Vagina (tissue), 2 donors: ENCODE measurements at regions of chr20 and their contacts with region 1.

Region 1: DNA sequence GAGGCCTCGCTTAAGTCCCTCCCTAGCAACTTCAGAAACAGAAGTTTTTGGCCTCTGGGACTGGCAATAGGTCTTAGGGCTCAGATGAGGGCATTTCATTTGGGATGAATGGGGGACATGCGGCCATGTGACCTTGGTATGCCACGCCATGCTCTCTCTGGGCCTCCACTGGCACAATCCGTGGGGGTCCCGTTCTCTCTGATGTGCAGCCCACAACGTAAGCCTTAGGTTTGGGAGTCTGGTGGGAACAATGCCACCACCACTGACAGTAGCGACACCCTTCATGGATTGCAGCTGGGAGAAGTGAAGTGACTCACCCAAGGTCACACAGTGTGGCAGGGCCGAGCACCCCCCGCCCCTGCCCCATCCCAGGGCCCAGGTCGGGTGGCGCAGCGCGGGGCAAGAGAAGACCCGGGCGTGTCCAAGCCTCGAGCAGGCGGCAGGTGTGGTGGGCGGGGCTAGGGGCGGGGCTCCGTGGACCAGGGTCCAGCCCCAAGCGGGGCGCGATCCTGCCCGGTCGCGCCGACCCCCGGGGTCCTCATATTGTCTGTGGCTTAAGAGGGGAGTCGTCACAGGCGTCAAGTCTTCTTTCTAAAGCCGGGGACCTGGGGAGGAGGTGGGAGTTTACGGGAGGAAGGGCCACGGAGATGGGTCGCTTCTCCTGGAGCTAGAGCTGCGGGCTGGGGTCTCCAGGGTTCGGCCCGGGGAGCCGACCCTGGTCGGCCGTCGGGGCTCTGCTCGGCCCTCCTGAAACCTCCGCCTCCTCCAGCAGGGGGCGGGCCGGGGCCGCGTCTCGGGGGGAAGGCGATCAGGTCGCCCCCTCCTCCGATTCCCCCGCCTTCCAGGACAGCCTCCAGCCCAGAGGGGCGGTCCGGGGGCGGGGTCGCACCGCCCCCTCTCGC is 698 bp upstream of the CEBPB start:
- DNase-seq: peak in 1 of 2 donors; percentile 93
- H3K4me3 ChIP-seq: peak overlapping the region; percentile 88 to 98
- H3K27ac ChIP-seq: peak overlapping the region; percentile 100
- H3K4me1 ChIP-seq: peaks cover 46% of the 10 kb centered on the region
- H3K27me3 ChIP-seq: no peaks in the 10 kb centered on the region
- CTCF ChIP-seq: peak; percentile 68 to 97 (median 86)
- POLR2A ChIP-seq: no peak

Region 2: DNA sequence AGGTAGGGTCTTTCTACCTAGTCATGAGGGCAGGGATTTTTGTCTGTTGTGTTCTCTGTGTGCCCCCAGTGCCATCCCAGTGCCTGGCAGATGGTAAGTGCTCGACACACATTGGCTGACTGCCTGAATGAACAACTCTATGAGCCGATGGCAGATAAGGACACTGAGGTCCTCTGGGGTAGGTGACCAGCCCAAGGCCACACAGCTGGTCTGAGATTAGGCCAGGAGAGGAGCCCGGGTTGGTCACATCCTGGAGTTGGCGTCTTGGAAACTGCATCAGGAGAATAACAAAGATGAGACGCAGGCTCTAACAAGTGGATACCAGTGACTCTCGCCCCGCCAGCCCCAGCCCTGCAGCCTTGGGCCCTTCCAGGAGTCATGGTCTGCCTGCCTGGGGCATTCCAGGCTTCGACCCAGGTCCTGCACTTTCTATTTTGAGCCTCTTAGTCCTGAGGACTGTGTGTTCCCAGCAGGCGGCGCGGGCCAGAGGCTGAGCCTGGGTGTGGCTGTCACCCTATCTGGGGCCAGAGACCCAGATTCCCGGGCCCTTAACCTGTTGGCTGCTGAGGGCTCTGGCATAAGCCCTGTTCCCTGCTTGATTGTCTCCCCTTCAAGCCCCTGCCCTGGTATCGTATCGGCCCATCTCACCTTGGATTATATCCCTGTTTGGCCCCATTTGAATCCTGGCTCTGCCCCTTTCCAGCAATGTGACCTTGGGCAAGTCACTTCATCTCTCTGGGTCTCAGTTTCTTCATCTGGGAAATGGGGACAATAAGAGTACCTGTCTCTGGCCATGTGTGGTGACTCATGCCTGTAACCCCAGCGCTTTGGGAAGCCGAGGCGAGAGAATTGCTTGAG is 89.0 kb after region 1 on chr20:
- intact Hi-C with region 1: loop called (anchors 5 kb)
- DNase-seq: no peak
- H3K4me3 ChIP-seq: no peak overlapping the region
- H3K27ac ChIP-seq: peak overlapping the region; percentile 95
- H3K4me1 ChIP-seq: peaks cover 58% of the 10 kb centered on the region
- H3K27me3 ChIP-seq: no peaks in the 10 kb centered on the region
- CTCF ChIP-seq: peak in 1 of 3 experiments; percentile 16
- POLR2A ChIP-seq: peak in 1 of 2 donors; percentile 10

Region 3: GRCh38 chr20:50308513-50309279 is 118.8 kb after region 1 on chr20:
- intact Hi-C with region 1: loop called (anchors 1 kb)
- DNase-seq: peak in 1 of 2 donors; percentile 98
- H3K4me3 ChIP-seq: no peak overlapping the region
- H3K27ac ChIP-seq: peak overlapping the region; percentile 91
- H3K4me1 ChIP-seq: peaks cover 76% of the 10 kb centered on the region
- H3K27me3 ChIP-seq: no peaks in the 10 kb centered on the region
- CTCF ChIP-seq: peak in 1 of 3 experiments; percentile 20
- POLR2A ChIP-seq: peak in 1 of 2 donors; percentile 74

Region 4: DNA sequence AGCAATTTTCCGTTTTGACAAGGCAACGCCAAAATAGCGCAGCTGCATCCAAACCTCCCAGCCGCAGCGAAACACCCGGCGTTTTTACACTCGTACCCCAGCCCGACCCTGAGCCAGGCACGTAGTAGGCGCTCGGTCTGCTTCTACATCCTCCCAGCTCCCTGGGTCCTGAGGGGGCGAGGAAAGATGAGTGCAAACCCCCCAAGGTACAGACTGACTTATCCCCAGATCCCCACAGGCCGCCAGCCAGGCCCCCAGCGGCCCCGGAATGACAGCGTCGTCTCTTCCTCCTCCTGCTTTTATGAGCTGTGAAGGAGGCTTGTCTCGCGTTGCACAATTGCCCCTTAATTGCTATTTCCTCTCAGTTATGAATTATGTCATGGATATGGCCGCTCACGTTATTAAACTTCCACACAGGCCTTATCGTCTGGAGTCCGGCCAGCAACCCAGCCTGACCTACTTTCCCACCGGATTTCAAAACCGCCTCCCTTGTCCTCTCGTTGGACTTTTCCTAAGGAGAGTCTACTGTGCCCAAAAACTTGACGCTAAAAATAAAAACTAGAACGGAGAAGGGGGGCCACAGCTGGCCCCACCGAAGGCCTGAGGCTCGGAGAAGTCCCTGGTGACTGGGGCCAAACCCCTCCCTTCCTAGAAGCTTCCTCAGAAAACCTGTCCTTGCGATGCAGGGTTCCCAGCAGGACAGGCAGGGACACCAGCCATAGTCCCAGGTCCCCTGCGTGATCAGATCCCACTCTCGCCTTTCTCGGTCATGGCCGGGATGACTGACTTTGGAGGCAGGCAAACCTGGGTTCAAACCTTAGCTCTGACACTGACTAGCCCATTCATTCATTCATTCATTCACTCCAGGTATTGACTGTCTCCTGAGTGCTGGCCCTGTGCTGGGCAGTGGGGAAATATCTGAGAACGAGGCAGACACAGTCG is 189.4 kb after region 1 on chr20:
- intact Hi-C with region 1: loop called (anchors 2 kb)
- DNase-seq: peak in 1 of 2 donors; percentile 99
- H3K4me3 ChIP-seq: peak overlapping the region; percentile 0 to 5
- H3K27ac ChIP-seq: peak overlapping the region; percentile 74
- H3K4me1 ChIP-seq: peaks cover 38% of the 10 kb centered on the region
- H3K27me3 ChIP-seq: no peaks in the 10 kb centered on the region
- CTCF ChIP-seq: no peak
- POLR2A ChIP-seq: peak in 1 of 2 donors; percentile 56

Region 5: GRCh38 chr20:50399917-50400704 is 210.2 kb after region 1 on chr20:
- intact Hi-C with region 1: loop called (anchors 5 kb)
- DNase-seq: no peak
- H3K4me3 ChIP-seq: no peak overlapping the region
- H3K27ac ChIP-seq: peak overlapping the region; percentile 15
- H3K4me1 ChIP-seq: peaks cover 25% of the 10 kb centered on the region
- H3K27me3 ChIP-seq: no peaks in the 10 kb centered on the region
- CTCF ChIP-seq: no peak
- POLR2A ChIP-seq: no peak

Region 6: GRCh38 chr20:50460460-50461267 is 270.7 kb after region 1 on chr20:
- intact Hi-C with region 1: loop called (anchors 2 kb)
- DNase-seq: no peak
- H3K4me3 ChIP-seq: no peak overlapping the region
- H3K27ac ChIP-seq: peak overlapping the region; percentile 64
- H3K4me1 ChIP-seq: peaks cover 25% of the 10 kb centered on the region
- H3K27me3 ChIP-seq: no peaks in the 10 kb centered on the region
- CTCF ChIP-seq: peak; percentile 89 to 99 (median 98)
- POLR2A ChIP-seq: no peak

Region 7: DNA sequence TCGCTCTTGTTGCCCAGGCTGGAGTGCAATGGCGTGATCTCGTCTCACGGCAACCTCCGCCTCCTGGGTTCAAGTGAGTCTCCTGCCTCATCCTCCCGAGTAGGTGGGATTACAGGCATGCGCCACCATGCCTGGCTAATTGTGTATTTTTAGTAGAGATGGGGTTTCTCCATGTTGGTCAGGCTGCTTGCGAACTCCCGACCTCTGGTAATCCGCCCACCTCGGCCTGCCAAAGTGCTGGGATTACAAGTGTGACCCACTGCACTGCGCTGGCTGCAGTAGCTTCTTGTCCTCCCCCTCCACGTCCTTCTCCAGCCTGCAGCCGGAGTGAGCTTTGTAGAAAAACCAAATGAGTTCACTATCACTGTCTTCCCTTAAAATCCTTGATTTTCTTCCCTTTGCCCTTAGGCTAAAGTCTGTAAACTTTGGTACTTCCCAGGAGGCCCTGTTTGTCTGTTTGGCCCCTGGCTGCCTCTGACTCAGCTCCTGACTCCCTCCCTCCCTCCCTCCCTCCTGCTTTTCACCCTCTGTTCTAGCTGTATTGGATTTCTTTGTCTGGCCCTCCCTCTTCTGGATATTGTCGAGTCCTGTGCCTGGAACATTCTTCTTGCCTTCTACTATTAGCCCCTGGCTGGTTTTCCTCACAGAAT is 554.3 kb after region 1 on chr20:
- intact Hi-C with region 1: loop called (anchors 10 kb)
- DNase-seq: peak in 1 of 2 donors; percentile 96
- H3K4me3 ChIP-seq: no peak overlapping the region
- H3K27ac ChIP-seq: peak overlapping the region; percentile 65
- H3K4me1 ChIP-seq: peaks cover 23% of the 10 kb centered on the region
- H3K27me3 ChIP-seq: no peaks in the 10 kb centered on the region
- CTCF ChIP-seq: no peak
- POLR2A ChIP-seq: no peak